Activated CD4-positive, alpha-beta memory T cell treated with anti-CD3 and anti-CD28 coated beads, Interleukin-2, amount 10 ng/mL, durations not matched to agents 7 days and 5 days (primary cell): ENCODE measurements at regions of chr10 and their contacts with region 1.

Region 1: DNA sequence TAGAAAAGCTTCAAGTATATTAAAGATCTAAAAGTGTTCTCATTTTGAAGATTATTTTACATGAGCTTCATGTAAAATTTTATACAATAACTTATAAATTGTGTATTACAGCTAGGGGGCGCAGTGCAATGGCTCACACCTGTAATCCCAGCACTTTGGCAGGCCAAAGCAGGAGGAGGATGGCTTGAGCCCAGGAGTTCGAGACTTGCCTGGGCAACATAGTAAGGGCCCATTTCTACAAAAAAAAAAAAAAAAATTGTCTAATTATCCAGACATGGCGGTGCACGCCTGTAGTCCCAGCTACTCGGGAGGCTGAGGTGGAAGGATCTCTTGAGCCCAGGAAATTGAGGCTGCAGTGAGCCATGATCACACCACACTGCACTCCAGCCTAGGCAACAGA is 16.6 kb downstream of the ACBD5 start:
- DNase-seq: peak; percentile 42
- H3K4me3 Mint-ChIP-seq: no peak overlapping the region
- H3K27ac Mint-ChIP-seq: peak overlapping the region; percentile 47
- H3K4me1 Mint-ChIP-seq: peaks cover 24% of the 10 kb centered on the region
- H3K27me3 Mint-ChIP-seq: no peaks in the 10 kb centered on the region

Region 2: DNA sequence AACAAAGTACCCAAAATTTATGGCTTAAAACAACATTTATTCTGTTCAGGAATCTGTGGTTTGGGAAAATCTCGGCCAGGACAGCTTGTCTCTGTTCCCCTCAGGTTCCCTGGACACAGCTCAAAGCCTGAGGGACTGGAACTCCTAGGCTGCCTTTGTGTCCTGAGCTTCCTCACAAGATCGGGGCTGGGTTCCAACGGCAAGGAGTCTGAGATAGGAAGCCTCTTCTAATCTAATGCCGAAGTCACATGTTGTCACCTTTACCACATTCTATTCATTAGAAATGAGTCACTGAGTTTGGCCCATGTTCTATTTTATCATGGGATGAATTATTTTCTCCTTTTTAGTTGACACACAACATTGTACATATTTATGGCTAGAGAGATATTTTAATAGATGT is 204.1 kb before region 1 on chr10:
- CTCF ChIA-PET with region 1: no interaction called
- POLR2A ChIA-PET with region 1: no interaction called
- DNase-seq: no peak
- H3K4me3 Mint-ChIP-seq: no peak overlapping the region
- H3K27ac Mint-ChIP-seq: no peak overlapping the region
- H3K4me1 Mint-ChIP-seq: peaks cover 16% of the 10 kb centered on the region
- H3K27me3 Mint-ChIP-seq: no peaks in the 10 kb centered on the region

Region 3: DNA sequence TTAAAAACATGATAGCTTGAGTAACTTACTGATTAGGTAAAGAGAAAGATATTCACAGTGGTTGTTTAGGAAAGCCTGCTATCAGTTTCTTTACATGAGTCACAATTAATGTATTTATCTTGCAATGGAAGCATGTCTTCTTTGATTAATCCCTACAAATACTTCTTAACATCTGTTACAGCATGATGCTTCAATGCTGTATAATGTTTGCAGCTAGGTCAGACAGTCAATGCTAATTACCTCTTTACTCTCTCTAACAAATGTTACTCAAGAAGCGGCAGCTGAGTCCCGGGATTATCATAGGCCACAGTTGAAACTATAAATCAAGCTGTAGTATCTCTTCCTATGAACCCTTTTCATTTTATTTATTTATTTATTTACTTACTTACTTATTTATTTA is 16.6 kb before region 1 on chr10:
- CTCF ChIA-PET with region 1: interaction called, 12 read pairs
- POLR2A ChIA-PET with region 1: interaction called, 4 read pairs
- DNase-seq: no peak
- H3K4me3 Mint-ChIP-seq: no peak overlapping the region
- H3K27ac Mint-ChIP-seq: no peak overlapping the region
- H3K4me1 Mint-ChIP-seq: no peaks in the 10 kb centered on the region
- H3K27me3 Mint-ChIP-seq: no peaks in the 10 kb centered on the region

Region 4: GRCh38 chr10:27235706-27236105 is 11.7 kb after region 1 on chr10:
- CTCF ChIA-PET with region 1: interaction called, 24 read pairs
- POLR2A ChIA-PET with region 1: interaction called, 8 read pairs
- DNase-seq: no peak
- H3K4me3 Mint-ChIP-seq: no peak overlapping the region
- H3K27ac Mint-ChIP-seq: no peak overlapping the region
- H3K4me1 Mint-ChIP-seq: peaks cover 12% of the 10 kb centered on the region
- H3K27me3 Mint-ChIP-seq: no peaks in the 10 kb centered on the region

Region 5: GRCh38 chr10:27360581-27361172 is 136.7 kb after region 1 on chr10:
- CTCF ChIA-PET with region 1: interaction called, 10 read pairs
- POLR2A ChIA-PET with region 1: interaction called, 4 read pairs
- DNase-seq: peak; percentile 85
- H3K4me3 Mint-ChIP-seq: no peak overlapping the region
- H3K27ac Mint-ChIP-seq: no peak overlapping the region
- H3K4me1 Mint-ChIP-seq: peaks cover 3% of the 10 kb centered on the region
- H3K27me3 Mint-ChIP-seq: peaks cover 4% of the 10 kb centered on the region